Activated B cell treated with CpG ODN at 0.5 μM for 24 hours (primary cell): ENCODE measurements at regions of chr4 and their contacts with region 1.

Region 1: GRCh38 chr4:986879-987623 is at the start of gene IDUA:
- DNase-seq: peak; percentile 86
- ATAC-seq: peak; percentile 87
- H3K4me3 Mint-ChIP-seq: peak within 1 kb of the TSS; percentile 83
- H3K27ac Mint-ChIP-seq: peak within 1 kb of the TSS; percentile 76
- H3K4me1 Mint-ChIP-seq: peaks cover 19% of the 10 kb centered on the region
- H3K27me3 Mint-ChIP-seq: no peaks in the 10 kb centered on the region
- CTCF ChIP-seq: no peak
- total RNA-seq, gene IDUA: 24.7 and 32.9 TPM in 2 replicates

Region 2: DNA sequence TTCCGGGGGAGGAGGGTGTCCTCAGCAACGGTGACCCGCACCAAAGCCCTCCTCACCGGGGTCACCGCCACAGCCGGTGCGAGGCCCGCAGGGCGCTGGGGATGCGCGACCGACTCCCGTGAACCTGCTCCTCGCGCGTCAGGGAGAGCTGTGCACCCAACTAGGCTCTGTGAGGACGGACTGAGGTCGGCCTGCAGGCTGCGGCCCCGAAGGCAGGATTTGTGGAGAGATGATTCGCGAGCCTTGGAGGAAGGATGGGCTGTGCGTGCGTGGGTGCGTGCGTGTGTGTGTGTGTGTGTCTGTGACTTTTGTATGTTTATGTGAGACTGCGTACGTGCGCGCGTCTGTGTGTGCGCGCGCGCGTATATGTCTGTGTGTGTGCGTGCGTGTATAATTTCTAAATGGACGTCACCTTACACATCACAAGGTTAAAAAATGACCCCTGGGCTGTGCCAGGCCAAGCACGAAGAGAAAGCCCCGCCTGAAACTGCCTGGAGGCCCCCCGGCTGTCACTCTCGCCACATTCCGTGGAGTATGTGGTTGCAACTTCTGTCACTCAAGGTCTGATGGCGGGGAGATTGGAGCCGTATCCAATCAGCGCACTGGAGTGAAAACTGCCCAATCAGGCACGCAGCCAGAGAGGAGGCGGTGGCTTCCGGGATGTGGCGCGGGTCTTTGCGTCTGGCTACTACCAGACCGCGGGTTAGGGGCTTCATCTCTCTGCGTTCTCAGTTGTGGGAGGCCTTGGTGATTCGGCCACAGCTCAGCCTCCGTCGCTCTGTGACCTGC is 649.7 kb before region 1 on chr4 and contains the start of gene ZNF141:
- CTCF ChIA-PET with region 1: no interaction called
- POLR2A ChIA-PET with region 1: no interaction called
- intact Hi-C with region 1: loop called (anchors 10 kb)
- DNase-seq: peak; percentile 78
- ATAC-seq: peak; percentile 92
- H3K4me3 Mint-ChIP-seq: peak within 1 kb of the TSS; percentile 100
- H3K27ac Mint-ChIP-seq: peak within 1 kb of the TSS; percentile 99
- H3K4me1 Mint-ChIP-seq: peaks cover 38% of the 10 kb centered on the region
- H3K27me3 Mint-ChIP-seq: no peaks in the 10 kb centered on the region
- CTCF ChIP-seq: no peak
- total RNA-seq, gene ZNF141: 36.9 and 47.8 TPM in 2 replicates

Region 3: GRCh38 chr4:781493-782216 is 205.4 kb before region 1 on chr4:
- CTCF ChIA-PET with region 1: interaction called, 9 read pairs
- POLR2A ChIA-PET with region 1: interaction called, 16 read pairs
- intact Hi-C with region 1: loop called (anchors 1 kb)
- DNase-seq: peak; percentile 97
- ATAC-seq: peak; percentile 93
- H3K4me3 Mint-ChIP-seq: peak overlapping the region; percentile 91
- H3K27ac Mint-ChIP-seq: peak overlapping the region; percentile 87
- H3K4me1 Mint-ChIP-seq: peaks cover 47% of the 10 kb centered on the region
- H3K27me3 Mint-ChIP-seq: peaks cover 18% of the 10 kb centered on the region
- CTCF ChIP-seq: no peak

Region 4: GRCh38 chr4:896216-896615 is 90.8 kb before region 1 on chr4:
- CTCF ChIA-PET with region 1: interaction called, 4 read pairs
- POLR2A ChIA-PET with region 1: no interaction called
- intact Hi-C with region 1: loop called (anchors 1 kb)
- DNase-seq: no peak
- ATAC-seq: no peak
- H3K4me3 Mint-ChIP-seq: no peak overlapping the region
- H3K27ac Mint-ChIP-seq: no peak overlapping the region
- H3K4me1 Mint-ChIP-seq: no peaks in the 10 kb centered on the region
- H3K27me3 Mint-ChIP-seq: no peaks in the 10 kb centered on the region
- CTCF ChIP-seq: no peak

Region 5: GRCh38 chr4:931960-932712 is 54.9 kb before region 1 on chr4 and contains the starts of genes GAK and TMEM175:
- CTCF ChIA-PET with region 1: interaction called, 15 read pairs
- POLR2A ChIA-PET with region 1: interaction called, 12 read pairs
- intact Hi-C with region 1: loop called (anchors 2 kb)
- DNase-seq: peak; percentile 99
- ATAC-seq: peak; percentile 90
- H3K4me3 Mint-ChIP-seq: peak within 1 kb of the TSS; percentile 93
- H3K27ac Mint-ChIP-seq: peak within 1 kb of the TSS; percentile 92
- H3K4me1 Mint-ChIP-seq: peaks cover 78% of the 10 kb centered on the region
- H3K27me3 Mint-ChIP-seq: no peaks in the 10 kb centered on the region
- CTCF ChIP-seq: no peak
- total RNA-seq, gene GAK: 159 and 172 TPM in 2 replicates
- total RNA-seq, gene TMEM175: 24.5 and 28.8 TPM in 2 replicates

Region 6: GRCh38 chr4:961351-962230 is 25.5 kb before region 1 on chr4:
- CTCF ChIA-PET with region 1: no interaction called
- POLR2A ChIA-PET with region 1: no interaction called
- intact Hi-C with region 1: no loop called
- DNase-seq: no peak
- ATAC-seq: peak; percentile 18
- H3K4me3 Mint-ChIP-seq: no peak overlapping the region
- H3K27ac Mint-ChIP-seq: no peak overlapping the region
- H3K4me1 Mint-ChIP-seq: peaks cover 2% of the 10 kb centered on the region
- H3K27me3 Mint-ChIP-seq: no peaks in the 10 kb centered on the region
- CTCF ChIP-seq: no peak

Region 7: DNA sequence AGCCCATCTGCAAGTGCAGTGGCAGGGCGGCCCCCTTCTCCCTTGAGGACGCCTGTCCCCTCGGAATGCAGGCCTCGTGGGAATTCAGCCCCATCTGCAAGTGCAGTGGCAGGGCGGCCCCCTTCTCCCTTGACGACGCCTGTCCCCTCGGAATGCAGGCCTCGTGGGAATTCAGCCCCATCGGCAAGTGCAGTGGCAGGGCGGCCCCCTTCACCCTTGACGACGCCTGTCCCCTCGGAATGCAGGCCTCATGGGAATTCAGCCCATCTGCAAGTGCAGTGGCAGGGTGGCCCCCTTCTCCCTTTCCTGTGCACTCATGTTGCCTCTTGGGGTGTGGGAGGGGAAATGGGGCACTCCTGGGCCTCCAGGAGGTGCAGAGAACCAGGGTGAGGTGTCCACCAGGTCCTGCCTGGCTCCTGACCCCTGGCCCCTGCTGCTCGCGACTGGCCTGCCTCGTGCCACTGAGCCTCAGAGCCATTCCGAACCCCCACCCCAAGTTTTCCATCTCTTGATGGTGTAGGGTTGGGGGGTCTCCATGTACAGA is 12.9 kb after region 1 on chr4:
- CTCF ChIA-PET with region 1: no interaction called
- POLR2A ChIA-PET with region 1: no interaction called
- intact Hi-C with region 1: loop called (anchors 1 kb)
- DNase-seq: peak; percentile 50
- ATAC-seq: peak; percentile 33
- H3K4me3 Mint-ChIP-seq: no peak overlapping the region
- H3K27ac Mint-ChIP-seq: no peak overlapping the region
- H3K4me1 Mint-ChIP-seq: peaks cover 31% of the 10 kb centered on the region
- H3K27me3 Mint-ChIP-seq: peaks cover 24% of the 10 kb centered on the region
- CTCF ChIP-seq: no peak

Region 8: GRCh38 chr4:1403591-1404572 is 416.8 kb after region 1 on chr4:
- CTCF ChIA-PET with region 1: no interaction called
- POLR2A ChIA-PET with region 1: no interaction called
- intact Hi-C with region 1: no loop called
- DNase-seq: no peak
- ATAC-seq: no peak
- H3K4me3 Mint-ChIP-seq: peak overlapping the region; percentile 11
- H3K27ac Mint-ChIP-seq: no peak overlapping the region
- H3K4me1 Mint-ChIP-seq: peaks cover 6% of the 10 kb centered on the region
- H3K27me3 Mint-ChIP-seq: peaks cover 35% of the 10 kb centered on the region
- CTCF ChIP-seq: no peak